ENCODE measurements at regions of chr14 and their contacts with region 1.

Region 1: GRCh38 chr14:87935877-87936276 is 57.1 kb downstream of the GALC start:
- DNase-seq: no peak
- H3K4me3 ChIP-seq: no peak overlapping the region
- H3K27ac ChIP-seq: no peak overlapping the region
- H3K4me1 ChIP-seq: no peaks in the 10 kb centered on the region
- H3K27me3 ChIP-seq: no peaks in the 10 kb centered on the region
- CTCF ChIP-seq: no peak
- EP300 ChIP-seq: no peak
- POLR2A ChIP-seq: no peak

Region 2: DNA sequence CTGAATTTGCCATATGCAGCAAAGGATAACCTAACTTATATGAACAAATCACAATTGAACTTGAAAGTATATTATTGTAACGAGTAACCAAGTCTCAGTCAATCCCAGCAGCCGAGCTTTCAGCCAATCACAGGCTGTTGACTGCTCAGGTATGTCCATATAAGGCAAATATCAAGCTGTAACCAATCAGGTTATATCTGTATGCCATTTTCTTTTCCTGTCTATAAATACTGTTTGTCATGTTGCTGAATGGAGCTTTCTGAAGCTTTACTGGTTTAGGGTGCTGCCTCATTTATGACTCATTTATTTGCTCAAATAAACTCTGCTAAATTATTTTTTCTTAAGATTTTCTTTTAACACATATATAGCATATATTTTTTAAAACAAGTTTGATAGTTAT is 1002.4 kb before region 1 on chr14:
- in situ Hi-C with region 1: no loop called
- intact Hi-C with region 1: no loop called
- DNase-seq: no peak
- H3K4me3 ChIP-seq: no peak overlapping the region
- H3K27ac ChIP-seq: no peak overlapping the region
- H3K4me1 ChIP-seq: no peaks in the 10 kb centered on the region
- H3K27me3 ChIP-seq: no peaks in the 10 kb centered on the region
- CTCF ChIP-seq: no peak
- EP300 ChIP-seq: no peak
- POLR2A ChIP-seq: no peak

Region 3: GRCh38 chr14:87579036-87579435 is 356.8 kb before region 1 on chr14:
- in situ Hi-C with region 1: no loop called
- intact Hi-C with region 1: no loop called
- DNase-seq: no peak
- H3K4me3 ChIP-seq: no peak overlapping the region
- H3K27ac ChIP-seq: no peak overlapping the region
- H3K4me1 ChIP-seq: no peaks in the 10 kb centered on the region
- H3K27me3 ChIP-seq: no peaks in the 10 kb centered on the region
- CTCF ChIP-seq: no peak
- EP300 ChIP-seq: no peak
- POLR2A ChIP-seq: no peak

Region 4: DNA sequence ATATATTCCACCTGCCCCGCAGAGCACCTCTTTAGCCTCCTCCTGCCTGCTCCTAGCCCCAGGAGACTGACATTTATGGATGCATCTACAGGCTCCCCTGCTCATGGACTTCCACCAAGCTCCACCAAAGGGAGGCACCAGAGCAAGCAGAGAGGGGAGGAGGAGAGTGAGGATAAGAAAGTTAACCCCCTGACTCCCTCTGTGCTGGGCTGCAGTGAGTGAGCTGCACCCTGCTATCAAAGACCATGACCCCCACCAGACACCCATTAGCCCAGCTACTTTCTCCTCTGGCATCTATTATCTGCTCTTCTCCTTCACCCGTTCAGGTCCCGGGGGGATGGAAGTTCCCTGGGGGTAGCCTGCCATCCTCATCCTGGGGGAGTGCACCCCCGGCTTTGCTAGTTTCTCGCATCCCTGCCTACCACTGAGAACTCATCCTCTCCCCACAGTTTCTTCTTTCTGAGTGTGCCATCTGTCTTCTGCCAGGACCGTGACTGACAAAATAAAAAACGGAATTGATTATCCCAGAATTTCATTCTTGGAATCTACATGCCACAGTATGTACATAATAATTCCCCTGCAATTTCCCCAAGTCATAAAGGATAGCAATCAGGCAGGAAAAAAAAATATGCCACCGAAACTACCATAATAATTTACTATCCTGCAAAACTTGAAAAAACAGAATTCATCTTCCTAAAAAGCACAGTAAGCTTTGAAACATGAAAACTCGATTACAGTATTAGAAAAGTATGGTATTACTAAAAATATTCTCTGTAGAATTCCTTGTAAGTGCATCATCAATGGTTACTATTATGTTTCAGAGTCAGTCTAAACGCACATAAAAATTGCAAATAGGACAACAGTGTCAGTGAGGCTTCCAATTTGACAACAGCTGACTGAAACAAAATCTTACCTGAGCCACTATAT is 1436.0 kb after region 1 on chr14:
- in situ Hi-C with region 1: no loop called
- intact Hi-C with region 1: loop called (anchors 5 kb)
- DNase-seq: no peak
- H3K4me3 ChIP-seq: no peak overlapping the region
- H3K27ac ChIP-seq: peak overlapping the region in 1 of 4 donors; percentile 41
- H3K4me1 ChIP-seq: peaks cover 20 to 58% (median 31%) of the 10 kb centered on the region in 4 donors
- H3K27me3 ChIP-seq: no peaks in the 10 kb centered on the region
- CTCF ChIP-seq: no peak
- EP300 ChIP-seq: no peak
- POLR2A ChIP-seq: no peak

Measured in transverse colon (tissue), 4 donors.